WTC11 (cell line): ENCODE measurements at regions of chr6 and their contacts with region 1.

Region 1: GRCh38 chr6:31114970-31115849 is 610 bp downstream of the PSORS1C1 start:
- DNase-seq: no peak
- ATAC-seq: peak; percentile 70
- H3K4me3 Mint-ChIP-seq: no peak overlapping the region
- H3K27ac Mint-ChIP-seq: no peak overlapping the region
- H3K4me1 Mint-ChIP-seq: peaks cover 30% of the 10 kb centered on the region
- H3K27me3 Mint-ChIP-seq: peaks cover 22% of the 10 kb centered on the region
- CTCF ChIP-seq: no peak

Region 2: GRCh38 chr6:30974488-30975252 is 140.5 kb before region 1 on chr6:
- CTCF ChIA-PET with region 1: no interaction called
- POLR2A ChIA-PET with region 1: no interaction called
- DNase-seq: no peak
- ATAC-seq: no peak
- H3K4me3 Mint-ChIP-seq: no peak overlapping the region
- H3K27ac Mint-ChIP-seq: no peak overlapping the region
- H3K4me1 Mint-ChIP-seq: peaks cover 25% of the 10 kb centered on the region
- H3K27me3 Mint-ChIP-seq: peaks cover 3% of the 10 kb centered on the region; the same call in 1 of the 2 replicates
- CTCF ChIP-seq: no peak

Region 3: GRCh38 chr6:31031095-31031494 is 84.1 kb before region 1 on chr6:
- CTCF ChIA-PET with region 1: no interaction called
- POLR2A ChIA-PET with region 1: no interaction called
- DNase-seq: no peak
- ATAC-seq: no peak
- H3K4me3 Mint-ChIP-seq: no peak overlapping the region
- H3K27ac Mint-ChIP-seq: no peak overlapping the region
- H3K4me1 Mint-ChIP-seq: no peaks in the 10 kb centered on the region
- H3K27me3 Mint-ChIP-seq: peaks cover 4% of the 10 kb centered on the region
- CTCF ChIP-seq: no peak

Region 4: GRCh38 chr6:31103136-31103535 is 12.1 kb before region 1 on chr6:
- CTCF ChIA-PET with region 1: interaction called, 14 read pairs
- POLR2A ChIA-PET with region 1: no interaction called
- DNase-seq: no peak
- ATAC-seq: no peak
- H3K4me3 Mint-ChIP-seq: no peak overlapping the region
- H3K27ac Mint-ChIP-seq: no peak overlapping the region
- H3K4me1 Mint-ChIP-seq: 0 out of 2 replicates have a peak, but pooled peaks cover 3% of the 10 kb centered on the region
- H3K27me3 Mint-ChIP-seq: no peaks in the 10 kb centered on the region; the same call in 1 of the 2 replicates
- CTCF ChIP-seq: no peak

Region 5: DNA sequence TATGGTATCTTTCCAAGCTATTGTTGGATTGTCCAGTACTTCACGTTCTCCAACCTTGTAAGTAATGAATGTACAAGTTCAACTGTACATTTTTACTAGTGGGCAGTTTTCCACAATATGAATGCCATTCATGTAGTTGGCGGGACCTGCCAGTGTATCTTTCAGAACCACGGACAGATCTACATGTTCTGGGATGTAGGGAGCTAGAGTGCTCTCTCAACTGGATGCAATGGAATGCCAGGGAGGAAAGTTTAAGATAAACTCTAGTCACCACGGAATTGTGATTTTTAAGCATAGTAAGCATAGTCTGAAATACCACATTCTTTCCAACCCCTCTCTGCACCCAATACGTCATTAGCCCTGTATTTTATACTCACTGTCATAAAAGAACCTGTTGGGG is 178.1 kb after region 1 on chr6:
- CTCF ChIA-PET with region 1: no interaction called
- POLR2A ChIA-PET with region 1: no interaction called
- DNase-seq: no peak
- ATAC-seq: no peak
- H3K4me3 Mint-ChIP-seq: no peak overlapping the region
- H3K27ac Mint-ChIP-seq: no peak overlapping the region
- H3K4me1 Mint-ChIP-seq: no peaks in the 10 kb centered on the region
- H3K27me3 Mint-ChIP-seq: peaks cover 32% of the 10 kb centered on the region
- CTCF ChIP-seq: no peak